Testis (tissue), 5 donors: ENCODE measurements at regions of chr17 and their contacts with region 1.

Region 1: DNA sequence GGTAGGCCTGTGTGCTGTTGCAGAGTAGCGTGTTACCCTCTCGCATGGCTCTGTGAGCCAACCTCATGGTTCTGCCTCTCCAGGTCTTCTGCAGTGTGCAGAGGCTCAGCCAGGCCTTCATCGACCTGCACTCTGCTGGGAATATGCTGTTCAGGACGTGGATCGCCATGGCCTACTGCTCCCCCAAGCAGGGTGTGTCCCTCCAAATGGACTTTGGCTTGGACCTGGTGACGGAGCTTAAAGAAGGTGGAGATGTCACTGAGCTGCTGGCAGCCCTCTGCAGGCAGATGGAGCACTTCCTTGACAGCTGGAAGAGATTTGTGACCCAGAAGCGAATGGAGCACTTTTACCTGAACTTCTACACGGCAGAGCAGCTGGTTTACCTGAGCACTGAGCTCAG is 75.8 kb upstream of the ENDOV start:
- DNase-seq: no peak
- H3K4me3 ChIP-seq: no peak overlapping the region
- H3K27ac ChIP-seq: no peak overlapping the region
- H3K4me1 ChIP-seq: no peaks in the 10 kb centered on the region
- H3K27me3 ChIP-seq: no peaks in the 10 kb centered on the region
- CTCF ChIP-seq: no peak
- POLR2A ChIP-seq: no peak

Region 2: GRCh38 chr17:79280866-79281572 is 1058.1 kb before region 1 on chr17:
- intact Hi-C with region 1: loop called (anchors 10 kb)
- DNase-seq: no peak
- H3K4me3 ChIP-seq: no peak overlapping the region
- H3K27ac ChIP-seq: no peak overlapping the region
- H3K4me1 ChIP-seq: no peaks in the 10 kb centered on the region
- H3K27me3 ChIP-seq: no peaks in the 10 kb centered on the region
- CTCF ChIP-seq: no peak
- POLR2A ChIP-seq: no peak

Region 3: DNA sequence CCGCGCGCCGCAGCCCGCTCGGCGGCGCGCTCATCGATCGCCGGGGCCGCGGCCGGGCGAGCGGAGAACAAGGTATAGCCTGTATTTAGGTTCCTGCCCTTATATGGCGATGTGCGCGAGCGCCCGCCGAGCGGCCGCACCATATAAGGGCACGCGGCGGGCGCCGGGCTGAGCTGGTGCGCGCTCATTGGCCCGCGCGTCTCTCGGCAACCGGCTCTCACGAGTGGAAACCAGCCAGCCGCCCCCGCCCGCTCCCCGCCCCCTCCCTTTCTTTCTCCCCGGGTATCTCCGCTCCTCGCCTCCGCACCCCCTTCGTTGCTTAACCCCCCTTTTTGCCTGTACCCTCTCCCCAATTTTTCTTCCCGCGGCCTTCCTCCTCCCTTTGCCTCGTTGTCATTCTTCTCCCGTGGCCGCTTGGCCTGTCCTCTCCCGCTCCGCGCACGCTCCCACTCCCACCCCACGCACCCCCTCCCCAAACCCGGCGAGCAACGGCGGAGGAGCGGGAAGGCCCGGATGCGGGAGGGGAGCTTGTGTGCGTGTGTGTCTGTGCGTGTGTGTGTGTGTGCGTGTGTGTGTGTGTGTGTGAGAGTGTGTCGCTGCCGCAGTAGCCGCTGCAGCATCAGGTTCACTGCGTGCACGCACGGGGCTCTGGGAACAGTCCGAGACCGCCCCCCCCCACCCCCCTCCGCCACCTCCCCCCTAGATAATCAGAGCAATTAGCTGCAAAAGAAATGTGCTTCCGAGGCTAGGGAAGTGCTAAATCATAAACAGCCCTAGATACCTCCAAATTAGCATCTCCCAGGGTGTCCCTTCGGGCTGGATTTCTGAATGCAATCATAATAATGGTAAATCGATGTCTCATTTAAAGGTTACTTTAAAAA is 528.7 kb before region 1 on chr17:
- intact Hi-C with region 1: no loop called
- DNase-seq: peak; percentile 89
- H3K4me3 ChIP-seq: peak overlapping the region; percentile 24 to 45
- H3K27ac ChIP-seq: no peak overlapping the region
- H3K4me1 ChIP-seq: peaks cover 10% of the 10 kb centered on the region
- H3K27me3 ChIP-seq: peaks cover 6% of the 10 kb centered on the region
- CTCF ChIP-seq: no peak
- POLR2A ChIP-seq: no peak

Region 4: DNA sequence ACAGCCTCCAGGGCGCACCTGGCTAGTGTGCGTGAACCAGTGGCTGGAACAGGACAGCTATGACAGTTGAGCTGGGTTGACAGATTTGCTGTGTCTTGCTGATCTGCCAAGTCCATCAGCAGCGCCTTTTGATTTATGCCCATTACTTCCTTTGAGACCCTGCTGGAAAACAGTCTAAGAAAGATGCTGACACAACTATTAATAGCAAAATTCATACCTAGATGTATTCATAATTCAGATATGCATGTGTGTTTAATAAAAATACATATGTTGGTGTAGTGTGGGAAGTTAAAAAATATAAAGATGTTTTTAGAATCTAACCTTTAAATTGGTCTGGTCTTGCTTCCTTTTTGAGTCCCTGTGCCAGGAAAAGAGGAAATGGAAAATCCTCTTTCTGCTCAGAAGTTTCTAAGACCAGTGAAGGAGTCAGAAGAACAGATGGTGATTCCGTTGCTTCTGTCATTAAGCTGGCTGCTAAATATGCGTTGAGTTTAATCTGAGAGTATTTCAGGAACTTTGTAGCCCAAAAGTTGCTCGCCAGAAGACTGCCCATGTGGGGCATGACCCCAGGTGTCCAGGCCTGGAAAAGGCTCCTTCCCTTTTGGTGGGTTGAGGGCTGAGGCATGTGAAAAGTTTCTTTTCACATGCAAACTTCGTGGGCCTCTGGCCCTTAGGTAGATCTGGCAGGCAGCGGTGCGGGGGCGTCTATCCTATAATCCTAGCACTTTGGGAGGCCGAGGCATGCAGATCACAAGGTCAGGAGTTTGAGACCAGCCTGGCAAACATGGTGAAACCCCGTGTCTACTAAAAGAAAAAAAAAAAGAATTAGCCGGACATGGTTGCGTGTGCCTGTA is 35.8 kb after region 1 on chr17:
- intact Hi-C with region 1: no loop called
- DNase-seq: no peak
- H3K4me3 ChIP-seq: no peak overlapping the region
- H3K27ac ChIP-seq: no peak overlapping the region
- H3K4me1 ChIP-seq: no peaks in the 10 kb centered on the region
- H3K27me3 ChIP-seq: no peaks in the 10 kb centered on the region
- CTCF ChIP-seq: no peak
- POLR2A ChIP-seq: no peak